Heart right ventricle (tissue), 16 donors: ENCODE measurements at regions of chr5 and their contacts with region 1.

Region 1: GRCh38 chr5:147391781-147392180 is 118.1 kb downstream of the DPYSL3 start:
- DNase-seq: peak in 1 of 2 donors; percentile 16
- ATAC-seq: peak; percentile 39 to 85 (median 67)
- H3K4me3 ChIP-seq: no peak overlapping the region
- H3K27ac ChIP-seq: no peak overlapping the region
- H3K4me1 ChIP-seq: peaks cover 0 to 8% (median 0%) of the 10 kb centered on the region in 9 donors
- H3K27me3 ChIP-seq: no peaks in the 10 kb centered on the region
- CTCF ChIP-seq: peak in 8 of 9 donors; percentile 24 to 52 (median 48)

Region 2: GRCh38 chr5:147576646-147577535 is 185.1 kb after region 1 on chr5:
- intact Hi-C with region 1: loop called in 3 of 10 experiments (anchors 10 kb)
- DNase-seq: peak; percentile 56 to 73
- ATAC-seq: peak in 4 of 8 donors; percentile 51 to 74 (median 64)
- H3K4me3 ChIP-seq: no peak overlapping the region
- H3K27ac ChIP-seq: no peak overlapping the region
- H3K4me1 ChIP-seq: peaks cover 0 to 24% (median 4%) of the 10 kb centered on the region in 9 donors
- H3K27me3 ChIP-seq: no peaks in the 10 kb centered on the region
- CTCF ChIP-seq: peak; percentile 74 to 90 (median 86)